ENCODE measurements at regions of chr4 and their contacts with region 1.

Region 1: GRCh38 chr4:85747882-85748491 is 273.0 kb downstream of the ARHGAP24 start:
- DNase-seq: peak; percentile 65
- H3K4me3 ChIP-seq: no peak overlapping the region
- CTCF ChIP-seq: peak; percentile 65

Region 2: DNA sequence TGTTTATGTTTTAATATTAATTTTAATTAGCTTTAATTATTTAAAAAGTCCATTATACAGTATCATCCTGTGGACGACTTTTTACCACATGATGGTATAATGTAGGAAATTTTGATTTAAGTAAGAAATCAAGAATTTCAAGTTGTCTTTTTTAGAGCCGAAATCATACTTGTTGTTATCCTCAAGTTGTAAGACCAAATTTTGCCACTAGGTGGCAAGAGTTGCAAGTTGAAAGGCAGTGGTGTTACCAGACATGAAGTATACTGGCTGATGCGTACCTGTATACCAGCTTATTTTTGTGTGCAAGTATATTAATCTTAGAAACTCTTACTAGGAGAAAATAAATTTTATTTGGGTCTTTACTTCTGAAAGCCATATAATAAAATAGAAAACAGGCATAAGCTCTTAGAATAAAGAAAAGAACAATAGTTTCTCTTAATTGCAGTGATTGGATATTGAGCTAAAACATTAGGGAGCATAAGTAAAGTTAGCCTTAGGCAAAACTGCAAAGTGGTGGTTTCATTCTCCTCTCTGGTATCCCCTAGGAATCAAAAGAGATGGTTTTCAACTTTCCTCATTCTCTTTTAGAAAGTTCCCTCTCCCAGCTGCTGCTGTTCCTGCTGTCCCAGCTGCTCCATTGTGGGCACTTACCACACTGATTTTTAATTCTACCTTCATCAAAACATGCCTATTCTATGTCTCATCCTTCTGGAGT is 663.5 kb before region 1 on chr4:
- CTCF ChIA-PET with region 1: interaction called, 35 read pairs
- POLR2A ChIA-PET with region 1: no interaction called
- DNase-seq: peak; percentile 29
- H3K4me3 ChIP-seq: no peak overlapping the region
- CTCF ChIP-seq: peak; percentile 61

Region 3: DNA sequence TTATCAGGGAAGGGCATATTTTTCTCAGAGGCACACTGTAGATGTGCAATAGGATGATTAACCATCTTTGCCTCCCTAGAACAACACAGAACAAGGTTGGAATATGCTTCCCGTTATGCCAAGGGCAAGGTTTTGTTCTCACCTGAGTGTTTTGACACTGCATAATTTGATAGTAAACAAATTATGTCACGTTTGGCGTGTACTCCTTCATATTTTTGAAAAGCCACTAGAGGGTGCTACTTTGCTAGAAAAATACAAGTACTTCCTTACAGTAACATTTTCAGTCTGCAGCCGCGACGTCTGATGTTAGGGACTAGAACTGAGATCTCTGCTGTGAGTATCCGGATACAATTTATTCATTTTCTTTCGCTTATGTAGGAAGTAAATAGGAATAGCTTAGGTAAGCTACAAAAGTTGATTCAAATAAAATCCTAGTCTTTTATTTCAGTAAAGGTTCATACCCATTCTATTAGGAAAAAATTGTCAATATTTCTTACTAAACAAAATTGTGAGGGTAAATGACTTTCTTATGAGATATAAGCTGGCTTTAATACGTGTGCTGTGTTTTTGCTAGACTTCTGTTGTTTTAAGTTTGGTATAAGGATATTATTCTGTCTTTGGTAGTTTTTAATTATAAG is 600.4 kb before region 1 on chr4:
- CTCF ChIA-PET with region 1: interaction called, 83 read pairs
- POLR2A ChIA-PET with region 1: no interaction called
- DNase-seq: peak; percentile 10
- H3K4me3 ChIP-seq: no peak overlapping the region
- CTCF ChIP-seq: peak; percentile 42

Region 4: DNA sequence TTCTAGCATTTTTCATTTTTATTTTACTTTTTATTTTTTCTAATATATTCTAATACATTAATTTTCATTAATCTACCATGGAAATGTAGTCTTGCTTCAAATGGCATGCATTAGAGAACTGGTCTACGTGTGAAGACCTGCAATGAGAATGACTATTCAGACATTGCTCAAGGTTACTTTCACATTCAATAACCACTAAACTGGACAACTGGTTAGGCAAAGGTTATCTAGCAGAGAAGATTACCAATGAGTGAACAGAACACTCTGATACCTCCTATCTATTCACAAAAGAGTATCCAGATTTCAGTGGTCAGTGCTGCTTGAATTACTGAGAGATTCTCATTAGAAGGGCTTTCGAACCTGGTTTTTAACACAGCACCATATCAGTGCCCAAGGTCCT is 331.9 kb before region 1 on chr4:
- CTCF ChIA-PET with region 1: interaction called, 11 read pairs
- POLR2A ChIA-PET with region 1: no interaction called
- DNase-seq: no peak
- H3K4me3 ChIP-seq: no peak overlapping the region
- CTCF ChIP-seq: no peak

Region 5: DNA sequence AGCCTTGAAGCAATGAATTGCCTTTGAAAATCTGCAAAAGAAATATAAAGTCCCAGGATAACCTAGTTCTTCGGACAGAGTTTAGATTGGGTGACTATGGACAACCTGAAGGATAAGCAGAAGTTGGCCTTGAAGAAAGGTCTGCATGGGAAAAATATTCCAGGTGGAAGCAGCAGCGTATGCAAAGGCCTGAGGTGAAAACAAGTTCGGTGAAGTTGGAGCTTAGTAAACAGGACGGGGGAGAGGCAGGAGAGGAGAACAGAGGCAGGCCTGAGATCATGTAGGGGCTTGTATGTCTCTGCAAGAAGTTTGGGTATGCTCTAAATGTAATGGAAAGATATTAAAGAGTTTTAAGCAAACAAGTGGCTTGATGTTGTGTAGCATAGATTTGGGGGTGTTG is 97.1 kb before region 1 on chr4:
- CTCF ChIA-PET with region 1: no interaction called
- POLR2A ChIA-PET with region 1: no interaction called
- DNase-seq: no peak
- H3K4me3 ChIP-seq: no peak overlapping the region
- CTCF ChIP-seq: no peak

Region 6: DNA sequence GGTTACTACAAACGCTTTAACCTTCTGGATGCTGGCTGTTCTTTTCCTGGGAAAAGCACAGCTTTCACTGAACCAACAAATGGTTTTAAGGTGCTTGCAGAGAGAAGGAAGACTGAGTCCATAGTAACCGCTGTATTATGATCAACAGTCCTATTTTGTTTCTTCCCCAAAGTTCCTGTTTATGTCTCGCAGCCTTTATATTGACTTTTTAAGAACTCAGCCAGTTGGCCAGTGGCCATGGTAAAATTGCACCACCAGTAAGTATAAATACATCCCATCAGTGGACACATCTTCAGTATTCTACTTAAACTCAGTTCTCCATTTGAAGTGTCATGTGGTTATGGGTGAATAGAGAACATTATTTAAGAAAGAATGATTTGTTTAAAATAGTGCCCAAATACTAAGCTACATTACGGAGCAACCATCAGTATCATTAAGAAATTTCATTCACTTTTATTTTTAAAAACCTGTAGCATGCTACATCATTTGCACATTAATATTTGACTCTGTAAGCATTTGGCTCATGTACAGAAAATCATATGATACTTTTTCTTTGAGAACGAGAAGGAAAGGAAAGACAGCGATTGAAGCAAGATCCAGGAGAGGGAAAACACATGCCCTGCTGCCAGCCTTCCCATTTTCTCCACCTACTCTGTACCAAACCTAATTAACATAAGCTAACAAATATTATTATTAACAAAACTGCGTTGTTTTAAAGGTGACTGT is 14.0 kb after region 1 on chr4:
- CTCF ChIA-PET with region 1: interaction called, 34 read pairs
- POLR2A ChIA-PET with region 1: no interaction called
- DNase-seq: no peak
- H3K4me3 ChIP-seq: no peak overlapping the region
- CTCF ChIP-seq: no peak

Region 7: DNA sequence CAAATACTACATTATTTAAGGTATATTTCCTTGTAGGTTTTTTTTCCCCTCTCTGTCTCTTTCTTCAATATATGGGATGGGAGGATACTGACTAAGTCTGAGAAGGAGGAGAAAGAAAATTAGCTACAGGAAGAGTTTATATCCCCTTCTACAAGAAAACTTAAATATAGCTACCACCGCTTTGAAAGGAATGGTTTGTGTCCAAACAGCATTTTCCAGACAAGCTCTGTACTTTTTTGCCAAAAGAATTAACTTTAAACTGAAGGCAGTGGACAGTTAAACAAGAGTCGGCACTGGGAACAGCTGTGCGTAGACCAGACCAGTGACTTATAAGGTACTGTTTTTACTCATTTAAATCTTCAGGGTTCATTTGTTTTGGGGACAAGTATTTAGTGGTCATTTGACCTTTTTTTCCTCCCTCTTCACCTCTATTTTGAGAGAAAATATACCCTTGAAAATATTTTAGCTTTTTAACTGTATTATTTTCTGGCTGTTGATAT is 30.7 kb after region 1 on chr4:
- CTCF ChIA-PET with region 1: interaction called, 17 read pairs
- POLR2A ChIA-PET with region 1: no interaction called
- DNase-seq: no peak
- H3K4me3 ChIP-seq: peak overlapping the region; percentile 45
- CTCF ChIP-seq: no peak

Region 8: DNA sequence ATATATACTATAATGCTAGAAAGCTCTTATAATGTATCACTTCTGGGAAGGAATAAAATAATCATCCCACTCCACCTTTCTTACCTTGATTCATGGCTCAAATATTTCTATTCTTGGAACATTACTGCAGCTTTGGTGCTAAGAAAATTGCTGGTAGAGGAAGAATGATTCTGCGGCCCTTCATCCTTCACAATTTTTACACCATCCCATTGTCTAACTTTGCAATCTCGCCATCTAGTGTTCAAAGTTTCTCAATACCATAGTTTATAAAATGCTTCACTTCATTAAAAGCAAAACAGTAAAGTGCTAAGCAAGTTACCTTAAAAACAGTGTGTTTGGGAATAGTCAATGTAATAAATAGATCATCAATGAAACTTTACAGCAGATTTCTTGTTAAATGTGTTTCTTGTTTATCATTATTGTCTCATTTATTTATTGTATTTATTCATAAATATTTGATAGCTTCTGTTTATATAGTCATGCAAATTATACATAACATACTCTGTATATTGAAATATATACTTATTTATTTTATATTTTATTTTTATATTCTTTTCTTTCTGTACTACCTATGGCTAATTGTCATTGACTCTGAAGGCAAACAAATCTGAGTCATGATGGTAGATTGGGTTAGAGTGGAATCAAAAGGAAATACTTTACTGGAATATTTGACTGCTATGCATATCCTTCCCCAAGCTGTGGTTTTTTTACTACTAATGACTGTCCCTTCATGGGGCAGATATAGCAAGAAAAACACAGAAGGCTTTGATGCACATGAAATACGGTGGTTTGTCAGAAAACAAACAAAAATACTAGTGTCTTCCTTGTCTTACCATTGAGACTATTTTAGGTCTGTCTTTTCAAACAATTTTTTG is 221.2 kb after region 1 on chr4:
- CTCF ChIA-PET with region 1: interaction called, 45 read pairs
- POLR2A ChIA-PET with region 1: no interaction called
- DNase-seq: no peak
- H3K4me3 ChIP-seq: no peak overlapping the region
- CTCF ChIP-seq: peak; percentile 30

Region 9: DNA sequence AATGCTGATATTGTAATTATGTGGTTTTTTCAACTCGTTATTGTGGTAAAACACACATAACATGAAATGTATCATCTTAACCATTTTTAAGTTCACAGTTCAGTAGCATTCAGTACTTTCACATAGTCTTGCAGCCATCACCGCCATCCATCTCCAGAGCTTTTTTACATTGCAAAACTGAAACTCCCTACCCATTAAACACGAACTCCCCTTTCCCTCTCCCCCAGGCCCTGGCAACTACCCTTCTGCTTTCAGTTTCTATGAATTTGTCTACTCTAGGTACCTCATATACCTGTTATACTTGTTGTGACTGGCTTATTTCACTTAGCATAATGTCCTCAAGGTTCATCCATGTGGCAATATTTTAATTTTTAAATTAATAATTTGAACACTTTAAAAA is 231.3 kb after region 1 on chr4:
- CTCF ChIA-PET with region 1: no interaction called
- POLR2A ChIA-PET with region 1: no interaction called
- DNase-seq: no peak
- H3K4me3 ChIP-seq: no peak overlapping the region
- CTCF ChIP-seq: no peak

Region 10: DNA sequence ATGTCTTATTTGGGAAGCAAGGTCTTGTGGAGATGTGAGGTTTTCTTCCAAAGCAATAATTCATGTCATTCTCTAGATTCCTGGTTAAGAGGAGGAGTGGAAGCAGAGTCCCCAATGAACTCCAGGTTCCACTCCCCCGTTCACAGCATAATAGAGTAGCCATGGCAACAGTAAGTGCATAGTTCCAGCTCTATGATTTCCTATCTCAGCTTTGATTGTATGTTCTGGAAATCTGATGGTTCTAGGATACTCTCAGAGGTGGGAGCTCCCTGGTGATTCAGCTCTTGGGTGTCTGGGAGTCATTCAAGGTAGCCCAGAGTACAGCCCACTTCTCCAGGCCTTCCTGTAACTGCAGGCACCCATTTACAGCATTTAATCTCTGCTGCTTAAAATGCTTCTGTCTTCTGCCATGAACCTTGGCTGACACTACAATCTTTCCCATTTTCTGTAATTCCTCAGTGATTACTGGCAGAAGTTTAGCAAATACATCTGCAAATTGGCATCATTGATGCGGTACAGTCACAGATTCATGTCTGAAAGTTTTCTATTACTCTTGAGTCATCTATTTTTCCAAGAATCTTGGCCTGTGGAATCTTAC is 369.8 kb after region 1 on chr4:
- CTCF ChIA-PET with region 1: no interaction called
- POLR2A ChIA-PET with region 1: no interaction called
- DNase-seq: peak; percentile 94
- H3K4me3 ChIP-seq: no peak overlapping the region
- CTCF ChIP-seq: no peak

Measured in AG04449 (cell line).